ENCODE measurements at regions of chr20 and their contacts with region 1.

Region 1: DNA sequence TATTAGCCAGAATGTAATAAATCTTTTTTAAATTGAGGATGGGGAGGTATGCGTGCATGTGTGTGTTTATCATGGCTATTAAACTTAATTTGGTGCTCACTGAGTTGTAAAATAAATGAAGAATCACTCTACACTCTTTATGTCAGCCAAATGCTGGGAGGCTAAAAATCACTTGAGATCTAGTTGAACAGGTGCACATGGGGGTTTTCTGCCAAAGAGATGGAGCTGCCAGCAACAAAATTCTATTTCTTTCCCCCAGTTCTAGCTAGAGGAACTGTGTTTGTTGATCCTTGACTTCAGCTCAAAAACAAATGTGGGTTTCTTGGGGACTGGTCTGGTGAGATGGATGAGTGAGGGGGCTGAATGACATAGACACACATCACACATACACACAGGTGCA is 183.3 kb upstream of the BTBD3 start:
- DNase-seq: no peak

Region 2: DNA sequence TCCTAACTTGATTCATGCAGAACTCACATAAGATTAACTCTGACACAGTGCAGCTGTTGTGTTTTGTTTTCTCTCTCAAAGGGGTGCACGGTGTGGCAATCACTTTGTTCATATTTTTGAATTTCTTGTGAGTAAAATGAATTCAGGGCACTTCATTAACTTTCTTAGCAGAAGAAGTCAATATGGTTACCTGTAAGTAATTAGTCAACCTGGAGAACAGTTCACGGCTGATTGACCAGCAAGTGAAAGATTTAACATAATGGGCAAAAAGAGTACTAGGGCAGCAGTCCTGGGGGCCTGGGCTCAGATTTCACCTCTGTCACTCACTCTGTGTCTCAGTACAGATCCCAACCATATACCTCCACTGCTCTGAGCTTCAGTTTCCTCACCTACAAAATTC is 1171.9 kb after region 1 on chr20:
- intact Hi-C with region 1: loop called in 1 of 2 experiments (anchors 5 kb)
- DNase-seq: no peak

Region 3: GRCh38 chr20:13661070-13661685 is 1926.7 kb after region 1 on chr20:
- intact Hi-C with region 1: no loop called
- DNase-seq: no peak

Measured in posterior vena cava (tissue), 2 donors.